Endothelial cell of umbilical vein (primary cell): ENCODE measurements at regions of chr3 and their contacts with region 1.

Region 1: GRCh38 chr3:30199096-30199759 is 407.2 kb upstream of the TGFBR2 start:
- DNase-seq: peak; percentile 78
- H3K4me3 ChIP-seq: no peak overlapping the region
- H3K27ac ChIP-seq: no peak overlapping the region
- H3K4me1 ChIP-seq: peaks cover 17% of the 10 kb centered on the region
- H3K27me3 ChIP-seq: no peaks in the 10 kb centered on the region
- CTCF ChIP-seq: peak; percentile 50 to 55
- POLR2A ChIP-seq: no peak

Region 2: GRCh38 chr3:28667646-28668621 is 1531.3 kb before region 1 on chr3:
- CTCF ChIA-PET with region 1: interaction called, 11 read pairs
- POLR2A ChIA-PET with region 1: no interaction called
- dilution Hi-C with region 1: no loop called
- intact Hi-C with region 1: no loop called
- DNase-seq: peak; percentile 79
- H3K4me3 ChIP-seq: no peak overlapping the region
- H3K27ac ChIP-seq: no peak overlapping the region
- H3K4me1 ChIP-seq: no peaks in the 10 kb centered on the region
- H3K27me3 ChIP-seq: peaks cover 0 to 4% of the 10 kb centered on the region in 2 experiments
- CTCF ChIP-seq: peak; percentile 79 to 87
- POLR2A ChIP-seq: no peak

Region 3: GRCh38 chr3:30048431-30048830 is 150.8 kb before region 1 on chr3:
- CTCF ChIA-PET with region 1: interaction called, 220 read pairs
- POLR2A ChIA-PET with region 1: no interaction called
- dilution Hi-C with region 1: no loop called
- intact Hi-C with region 1: no loop called
- DNase-seq: no peak
- H3K4me3 ChIP-seq: no peak overlapping the region
- H3K27ac ChIP-seq: no peak overlapping the region
- H3K4me1 ChIP-seq: peaks cover 8% of the 10 kb centered on the region
- H3K27me3 ChIP-seq: no peaks in the 10 kb centered on the region
- CTCF ChIP-seq: no peak
- POLR2A ChIP-seq: no peak

Region 4: GRCh38 chr3:30150967-30151366 is 48.3 kb before region 1 on chr3:
- CTCF ChIA-PET with region 1: interaction called, 20 read pairs
- POLR2A ChIA-PET with region 1: no interaction called
- dilution Hi-C with region 1: no loop called
- intact Hi-C with region 1: no loop called
- DNase-seq: no peak
- H3K4me3 ChIP-seq: no peak overlapping the region
- H3K27ac ChIP-seq: no peak overlapping the region
- H3K4me1 ChIP-seq: peaks cover 9% of the 10 kb centered on the region
- H3K27me3 ChIP-seq: peaks cover 9 to 19% of the 10 kb centered on the region in 2 experiments
- CTCF ChIP-seq: no peak
- POLR2A ChIP-seq: no peak

Region 5: GRCh38 chr3:30188713-30189112 is 10.5 kb before region 1 on chr3:
- CTCF ChIA-PET with region 1: interaction called, 22 read pairs
- POLR2A ChIA-PET with region 1: no interaction called
- dilution Hi-C with region 1: no loop called
- intact Hi-C with region 1: no loop called
- DNase-seq: no peak
- H3K4me3 ChIP-seq: no peak overlapping the region
- H3K27ac ChIP-seq: no peak overlapping the region
- H3K4me1 ChIP-seq: peaks cover 3% of the 10 kb centered on the region
- H3K27me3 ChIP-seq: peaks cover 2 to 10% of the 10 kb centered on the region in 2 experiments
- CTCF ChIP-seq: no peak
- POLR2A ChIP-seq: no peak

Region 6: GRCh38 chr3:30342319-30343060 is 143.3 kb after region 1 on chr3:
- CTCF ChIA-PET with region 1: interaction called, 18 read pairs
- POLR2A ChIA-PET with region 1: no interaction called
- dilution Hi-C with region 1: no loop called
- intact Hi-C with region 1: loop called (anchors 2 kb)
- DNase-seq: peak; percentile 94
- H3K4me3 ChIP-seq: peak overlapping the region in 1 of 3 experiments; percentile 32
- H3K27ac ChIP-seq: peak overlapping the region; percentile 98
- H3K4me1 ChIP-seq: peaks cover 62% of the 10 kb centered on the region
- H3K27me3 ChIP-seq: no peaks in the 10 kb centered on the region
- CTCF ChIP-seq: no peak
- POLR2A ChIP-seq: no peak

Region 7: DNA sequence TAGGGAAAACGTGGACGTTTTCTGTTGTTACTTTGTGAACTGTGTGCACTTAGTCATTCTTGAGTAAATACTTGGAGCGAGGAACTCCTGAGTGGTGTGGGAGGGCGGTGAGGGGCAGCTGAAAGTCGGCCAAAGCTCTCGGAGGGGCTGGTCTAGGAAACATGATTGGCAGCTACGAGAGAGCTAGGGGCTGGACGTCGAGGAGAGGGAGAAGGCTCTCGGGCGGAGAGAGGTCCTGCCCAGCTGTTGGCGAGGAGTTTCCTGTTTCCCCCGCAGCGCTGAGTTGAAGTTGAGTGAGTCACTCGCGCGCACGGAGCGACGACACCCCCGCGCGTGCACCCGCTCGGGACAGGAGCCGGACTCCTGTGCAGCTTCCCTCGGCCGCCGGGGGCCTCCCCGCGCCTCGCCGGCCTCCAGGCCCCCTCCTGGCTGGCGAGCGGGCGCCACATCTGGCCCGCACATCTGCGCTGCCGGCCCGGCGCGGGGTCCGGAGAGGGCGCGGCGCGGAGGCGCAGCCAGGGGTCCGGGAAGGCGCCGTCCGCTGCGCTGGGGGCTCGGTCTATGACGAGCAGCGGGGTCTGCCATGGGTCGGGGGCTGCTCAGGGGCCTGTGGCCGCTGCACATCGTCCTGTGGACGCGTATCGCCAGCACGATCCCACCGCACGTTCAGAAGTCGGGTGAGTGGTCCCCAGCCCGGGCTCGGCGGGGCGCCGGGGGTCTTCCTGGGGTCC is 407.2 kb after region 1 on chr3 and contains the start of gene TGFBR2:
- CTCF ChIA-PET with region 1: interaction called, 22 read pairs
- POLR2A ChIA-PET with region 1: no interaction called
- dilution Hi-C with region 1: no loop called
- intact Hi-C with region 1: loop called (anchors 1 kb)
- DNase-seq: peak; percentile 100
- H3K4me3 ChIP-seq: peak within 1 kb of the TSS; percentile 57 to 99 (median 86)
- H3K27ac ChIP-seq: peak within 1 kb of the TSS; percentile 96
- H3K4me1 ChIP-seq: peaks cover 50% of the 10 kb centered on the region
- H3K27me3 ChIP-seq: no peaks in the 10 kb centered on the region
- CTCF ChIP-seq: peak; percentile 3 to 35
- POLR2A ChIP-seq: peak; percentile 79
- total RNA-seq, gene TGFBR2: 250 and 259 TPM in 2 replicates